Activated naive CD4-positive, alpha-beta T cell treated with anti-CD3 and anti-CD28 coated beads for 36 hours (primary cell): ENCODE measurements at regions of chr3 and their contacts with region 1.

Region 1: GRCh38 chr3:52109611-52110301 is 44.5 kb downstream of the POC1A start:
- DNase-seq: no peak
- H3K4me3 Mint-ChIP-seq: no peak overlapping the region
- H3K27ac Mint-ChIP-seq: no peak overlapping the region
- H3K4me1 Mint-ChIP-seq: no peaks in the 10 kb centered on the region
- H3K27me3 Mint-ChIP-seq: no peaks in the 10 kb centered on the region

Region 2: DNA sequence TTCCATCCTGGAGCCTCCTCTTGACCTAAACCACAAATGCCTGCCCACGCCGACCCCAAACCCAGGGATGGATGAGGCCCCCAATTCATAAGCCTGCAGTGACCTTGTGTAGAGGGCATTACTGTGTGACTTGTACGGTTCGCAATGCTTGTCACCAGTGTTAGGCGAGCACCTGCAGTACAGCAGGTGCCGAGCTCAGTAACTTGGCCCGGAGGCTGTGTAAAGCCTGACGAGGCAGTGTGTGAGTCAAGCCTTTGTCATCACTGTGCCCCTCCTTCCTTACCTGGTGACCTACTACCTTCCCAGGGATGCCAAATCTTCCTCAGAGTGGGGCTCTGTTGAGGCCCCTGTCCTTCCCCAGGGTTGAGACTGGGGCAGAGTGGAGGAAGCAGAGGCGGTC is 1713.3 kb before region 1 on chr3:
- CTCF ChIA-PET with region 1: no interaction called
- intact Hi-C with region 1: no loop called
- DNase-seq: no peak
- H3K4me3 Mint-ChIP-seq: no peak overlapping the region
- H3K27ac Mint-ChIP-seq: no peak overlapping the region
- H3K4me1 Mint-ChIP-seq: no peaks in the 10 kb centered on the region
- H3K27me3 Mint-ChIP-seq: no peaks in the 10 kb centered on the region

Region 3: DNA sequence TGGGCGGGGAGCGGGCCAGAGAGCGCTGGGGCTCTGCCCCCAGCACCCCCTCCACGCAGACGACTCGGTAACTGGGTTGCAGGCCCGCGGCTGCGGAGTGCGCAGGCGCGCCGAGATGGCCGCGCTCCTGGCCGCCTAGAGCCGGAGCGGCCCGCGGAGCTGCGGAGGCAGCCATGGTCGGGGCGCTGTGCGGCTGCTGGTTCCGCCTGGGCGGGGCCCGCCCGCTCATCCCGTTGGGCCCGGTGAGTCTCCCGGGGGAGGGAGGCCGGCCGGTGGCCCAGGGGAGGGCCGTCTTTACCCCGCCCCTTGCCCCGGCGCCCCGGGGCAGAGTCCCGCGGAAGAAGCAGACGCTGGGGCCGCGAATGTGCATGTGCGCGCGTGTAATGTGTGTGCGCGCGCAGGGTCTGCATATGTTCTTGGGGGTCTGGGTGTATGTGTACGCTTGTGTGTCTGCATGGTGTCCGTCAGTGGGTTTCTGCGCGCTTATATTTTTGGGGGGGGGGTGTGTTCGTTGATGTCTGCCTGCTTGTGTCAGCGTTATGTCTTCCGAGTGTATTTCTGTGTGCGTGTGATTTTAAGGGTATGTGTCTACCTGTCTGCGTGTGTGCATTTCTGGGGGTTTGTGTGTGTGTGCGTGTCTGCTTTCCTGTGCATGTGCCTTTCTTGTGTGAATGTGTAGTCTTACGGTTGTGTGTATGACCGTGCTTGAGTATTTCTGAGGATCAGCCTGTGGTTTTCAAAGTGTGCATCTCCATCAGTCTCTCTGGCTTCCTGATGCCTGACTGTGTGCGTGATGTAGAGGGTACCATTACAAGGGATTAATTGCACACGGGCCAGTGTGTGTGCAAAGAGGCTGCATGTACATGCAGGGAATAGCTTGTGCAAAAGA is 134.5 kb before region 1 on chr3 and contains the start of gene ABHD14A:
- CTCF ChIA-PET with region 1: no interaction called
- intact Hi-C with region 1: no loop called
- DNase-seq: peak; percentile 70
- H3K4me3 Mint-ChIP-seq: peak within 1 kb of the TSS; percentile 99
- H3K27ac Mint-ChIP-seq: peak within 1 kb of the TSS; percentile 97
- H3K4me1 Mint-ChIP-seq: peaks cover 37% of the 10 kb centered on the region
- H3K27me3 Mint-ChIP-seq: no peaks in the 10 kb centered on the region
- total RNA-seq, gene ABHD14A: 5.4 to 5.7 TPM

Region 4: DNA sequence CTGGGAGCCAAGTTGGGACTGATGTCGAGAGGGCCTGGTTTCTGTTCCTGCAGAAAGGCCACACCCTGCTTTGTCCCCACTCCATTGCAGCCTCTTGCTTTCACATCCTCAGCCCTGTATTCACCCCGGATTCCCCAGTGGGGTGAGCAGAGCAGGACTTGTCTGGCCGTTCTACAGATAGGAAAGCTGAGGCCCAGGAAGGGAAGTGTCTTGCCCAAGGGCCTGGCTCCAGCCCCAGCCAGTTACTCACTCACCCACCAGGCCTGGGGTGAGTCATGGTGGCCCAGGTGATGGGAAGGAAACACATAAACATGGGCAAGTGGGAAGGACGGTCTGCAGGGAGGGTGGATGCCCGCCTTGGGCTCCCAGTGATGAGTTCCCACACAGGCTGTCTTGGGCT is 47.3 kb before region 1 on chr3:
- CTCF ChIA-PET with region 1: no interaction called
- intact Hi-C with region 1: loop called (anchors 5 kb)
- DNase-seq: no peak
- H3K4me3 Mint-ChIP-seq: no peak overlapping the region
- H3K27ac Mint-ChIP-seq: no peak overlapping the region
- H3K4me1 Mint-ChIP-seq: no peaks in the 10 kb centered on the region
- H3K27me3 Mint-ChIP-seq: no peaks in the 10 kb centered on the region

Region 5: GRCh38 chr3:52090131-52090932 is 19.4 kb before region 1 on chr3:
- CTCF ChIA-PET with region 1: no interaction called
- intact Hi-C with region 1: no loop called
- DNase-seq: no peak
- H3K4me3 Mint-ChIP-seq: no peak overlapping the region
- H3K27ac Mint-ChIP-seq: no peak overlapping the region
- H3K4me1 Mint-ChIP-seq: peaks cover 16% of the 10 kb centered on the region
- H3K27me3 Mint-ChIP-seq: no peaks in the 10 kb centered on the region

Region 6: DNA sequence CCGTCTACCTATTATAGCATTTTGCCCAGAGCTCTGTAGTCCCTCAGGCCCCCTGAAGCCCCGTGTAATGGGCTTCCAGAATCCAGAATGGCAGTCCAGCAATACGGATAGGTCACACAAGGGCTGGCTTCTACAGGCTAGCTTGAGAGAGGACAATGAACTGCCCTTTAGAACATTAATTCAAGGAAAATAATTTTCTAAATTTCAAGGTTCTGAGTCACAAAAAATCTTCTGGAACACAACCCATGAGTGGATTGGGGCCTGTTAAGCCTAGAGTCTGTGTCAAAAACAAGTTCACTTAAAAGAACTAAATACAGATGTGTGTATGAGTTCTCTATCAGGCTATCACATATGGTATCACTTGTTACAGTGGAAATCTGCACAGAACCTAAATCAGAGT is 1208.8 kb after region 1 on chr3:
- CTCF ChIA-PET with region 1: no interaction called
- intact Hi-C with region 1: no loop called
- DNase-seq: no peak
- H3K4me3 Mint-ChIP-seq: no peak overlapping the region
- H3K27ac Mint-ChIP-seq: no peak overlapping the region
- H3K4me1 Mint-ChIP-seq: no peaks in the 10 kb centered on the region
- H3K27me3 Mint-ChIP-seq: no peaks in the 10 kb centered on the region